ENCODE measurements at regions of chr11 and their contacts with region 1.

Region 1: GRCh38 chr11:47552566-47553416 is at the start of gene CELF1:
- DNase-seq: peak; percentile 85 to 97 (median 91)
- ATAC-seq: peak; percentile 93
- H3K4me3 ChIP-seq: peak within 1 kb of the TSS; percentile 99
- H3K4me3 Mint-ChIP-seq: peak within 1 kb of the TSS; percentile 98
- H3K27ac ChIP-seq: peak within 1 kb of the TSS; percentile 78 to 88
- H3K27ac Mint-ChIP-seq: peak within 1 kb of the TSS; percentile 98
- H3K4me1 ChIP-seq: peaks cover 42% of the 10 kb centered on the region
- H3K4me1 Mint-ChIP-seq: peaks cover 54% of the 10 kb centered on the region
- H3K27me3 ChIP-seq: no peaks in the 10 kb centered on the region
- H3K27me3 Mint-ChIP-seq: no peaks in the 10 kb centered on the region
- CTCF ChIP-seq: peak; percentile 81
- total RNA-seq, gene CELF1: 103 to 111 TPM

Region 2: DNA sequence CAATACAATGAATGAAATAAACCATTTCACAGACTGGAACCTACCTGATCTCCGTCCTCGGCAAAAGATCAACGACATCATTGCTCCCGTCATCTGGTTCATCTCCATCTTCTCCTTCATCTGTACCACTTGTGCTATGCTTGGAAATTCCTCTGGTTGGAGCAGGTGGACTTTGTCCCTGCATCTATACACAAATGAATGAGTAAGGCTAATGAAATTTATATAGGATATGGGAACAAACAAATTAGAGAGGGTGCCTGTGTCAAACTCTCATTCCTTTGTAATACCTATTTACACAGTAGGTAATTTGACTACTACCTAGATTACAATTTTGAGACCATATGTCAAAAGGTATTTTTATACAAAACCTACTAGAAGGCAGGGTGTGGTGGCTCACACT is 774.4 kb before region 1 on chr11:
- CTCF ChIA-PET with region 1: no interaction called
- POLR2A ChIA-PET with region 1: no interaction called
- intact Hi-C with region 1: no loop called
- DNase-seq: no peak
- ATAC-seq: no peak
- H3K4me3 ChIP-seq: no peak overlapping the region
- H3K4me3 Mint-ChIP-seq: no peak overlapping the region
- H3K27ac ChIP-seq: no peak overlapping the region
- H3K27ac Mint-ChIP-seq: no peak overlapping the region
- H3K4me1 ChIP-seq: no peaks in the 10 kb centered on the region
- H3K4me1 Mint-ChIP-seq: no peaks in the 10 kb centered on the region
- H3K27me3 ChIP-seq: no peaks in the 10 kb centered on the region
- H3K27me3 Mint-ChIP-seq: no peaks in the 10 kb centered on the region
- CTCF ChIP-seq: no peak

Region 3: GRCh38 chr11:47426061-47426956 is 126.5 kb before region 1 on chr11 and contains the start of gene PSMC3:
- CTCF ChIA-PET with region 1: interaction called, 5 read pairs
- POLR2A ChIA-PET with region 1: no interaction called
- intact Hi-C with region 1: loop called in 1 of 2 experiments (anchors 2 kb)
- DNase-seq: peak; percentile 93 to 99 (median 98)
- ATAC-seq: peak; percentile 98
- H3K4me3 ChIP-seq: peak within 1 kb of the TSS; percentile 100
- H3K4me3 Mint-ChIP-seq: peak within 1 kb of the TSS; percentile 100
- H3K27ac ChIP-seq: peak within 1 kb of the TSS; percentile 84
- H3K27ac Mint-ChIP-seq: peak within 1 kb of the TSS; percentile 90
- H3K4me1 ChIP-seq: peaks cover 30% of the 10 kb centered on the region
- H3K4me1 Mint-ChIP-seq: peaks cover 25% of the 10 kb centered on the region
- H3K27me3 ChIP-seq: no peaks in the 10 kb centered on the region
- H3K27me3 Mint-ChIP-seq: no peaks in the 10 kb centered on the region
- CTCF ChIP-seq: no peak
- total RNA-seq, gene PSMC3: 51.3 to 59.5 TPM

Region 4: DNA sequence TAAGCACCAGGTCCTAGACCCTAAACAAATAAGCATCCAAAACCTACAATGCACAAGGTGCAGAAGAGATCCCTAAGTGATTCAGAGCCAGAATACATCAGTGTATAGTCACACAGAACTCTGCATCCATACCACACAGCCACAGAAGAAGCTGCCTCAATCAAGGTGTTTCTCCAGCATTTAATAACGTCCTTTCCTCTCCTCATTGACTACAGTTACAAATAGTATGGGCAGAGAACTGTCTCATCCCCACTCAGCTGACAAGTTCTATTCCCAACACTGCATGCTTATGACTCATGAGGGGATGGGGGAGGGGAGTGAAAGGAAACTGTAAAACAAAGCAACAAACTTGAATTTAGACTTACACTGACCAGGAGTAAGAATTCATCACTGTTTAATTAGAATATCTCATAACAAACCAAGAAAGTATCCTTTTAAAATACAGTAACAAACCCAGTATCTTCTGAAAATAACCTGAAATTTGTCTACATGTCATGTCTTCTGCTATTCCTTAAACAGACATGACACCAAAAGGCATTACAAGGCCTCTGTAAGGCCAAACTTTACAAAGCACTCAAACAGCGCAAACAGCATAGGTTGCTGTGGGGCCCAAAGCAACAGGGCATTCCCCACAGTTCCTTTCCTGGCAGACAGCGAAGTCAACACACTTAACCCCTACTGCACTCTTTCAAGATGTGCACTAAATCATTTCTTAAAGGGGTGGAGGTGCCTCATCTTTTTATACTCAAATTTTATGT is 29.1 kb before region 1 on chr11:
- CTCF ChIA-PET with region 1: interaction called, 4 read pairs
- POLR2A ChIA-PET with region 1: interaction called, 5 read pairs
- intact Hi-C with region 1: loop called in 1 of 2 experiments (anchors 1 kb)
- DNase-seq: peak in 11 of 14 experiments; percentile 13 to 81 (median 42)
- ATAC-seq: peak; percentile 82
- H3K4me3 ChIP-seq: peak overlapping the region; percentile 10
- H3K4me3 Mint-ChIP-seq: peak overlapping the region; percentile 55
- H3K27ac ChIP-seq: peak overlapping the region; percentile 61 to 63
- H3K27ac Mint-ChIP-seq: peak overlapping the region; percentile 87
- H3K4me1 ChIP-seq: peaks cover 64% of the 10 kb centered on the region
- H3K4me1 Mint-ChIP-seq: peaks cover 58% of the 10 kb centered on the region
- H3K27me3 ChIP-seq: no peaks in the 10 kb centered on the region
- H3K27me3 Mint-ChIP-seq: no peaks in the 10 kb centered on the region
- CTCF ChIP-seq: no peak

Region 5: DNA sequence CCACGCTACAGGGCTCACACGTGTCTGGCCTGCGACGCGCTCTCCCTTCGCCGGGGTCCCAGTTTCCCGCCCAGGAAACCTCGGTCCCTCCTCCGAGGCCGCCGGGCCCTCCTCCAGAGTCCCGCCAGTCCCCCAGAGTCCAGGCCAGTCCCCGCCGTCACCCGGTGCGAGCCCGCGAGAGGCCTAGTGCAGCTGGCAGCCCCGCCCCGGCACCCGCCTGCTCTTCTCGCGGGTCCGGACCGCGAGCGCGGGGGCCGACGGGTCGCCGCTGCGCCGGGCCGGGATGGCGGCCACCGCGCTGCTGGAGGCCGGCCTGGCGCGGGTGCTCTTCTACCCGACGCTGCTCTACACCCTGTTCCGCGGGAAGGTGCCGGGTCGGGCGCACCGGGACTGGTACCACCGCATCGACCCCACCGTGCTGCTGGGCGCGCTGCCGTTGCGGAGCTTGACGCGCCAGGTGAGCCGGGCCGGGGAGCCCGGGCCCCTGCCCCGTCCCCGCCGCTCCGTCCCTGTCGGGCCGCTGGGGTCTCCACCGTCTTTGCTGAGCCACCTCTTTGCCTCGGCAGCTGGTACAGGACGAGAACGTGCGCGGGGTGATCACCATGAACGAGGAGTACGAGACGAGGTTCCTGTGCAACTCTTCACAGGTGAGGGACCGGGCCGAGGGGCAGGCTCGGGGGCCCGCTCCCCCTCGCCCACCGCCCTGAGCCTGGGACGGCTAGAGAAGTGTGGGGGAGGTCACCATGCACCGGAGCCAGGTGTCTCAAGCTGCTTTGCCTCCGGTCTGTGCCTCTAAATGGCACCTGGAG is 12.8 kb after region 1 on chr11 and contains the start of gene PTPMT1:
- CTCF ChIA-PET with region 1: interaction called, 19 read pairs
- POLR2A ChIA-PET with region 1: interaction called, 38 read pairs
- intact Hi-C with region 1: no loop called
- DNase-seq: peak; percentile 34 to 81 (median 58)
- ATAC-seq: peak; percentile 88
- H3K4me3 ChIP-seq: peak within 1 kb of the TSS; percentile 86
- H3K4me3 Mint-ChIP-seq: peak within 1 kb of the TSS; percentile 87
- H3K27ac ChIP-seq: peak within 1 kb of the TSS; percentile 41 to 83
- H3K27ac Mint-ChIP-seq: peak within 1 kb of the TSS; percentile 80
- H3K4me1 ChIP-seq: peaks cover 25% of the 10 kb centered on the region
- H3K4me1 Mint-ChIP-seq: peaks cover 20% of the 10 kb centered on the region
- H3K27me3 ChIP-seq: no peaks in the 10 kb centered on the region
- H3K27me3 Mint-ChIP-seq: no peaks in the 10 kb centered on the region
- CTCF ChIP-seq: no peak
- total RNA-seq, gene PTPMT1: 18.9 to 26.7 TPM

Region 6: GRCh38 chr11:47642099-47642855 is 89.5 kb after region 1 on chr11 and contains the start of gene MTCH2:
- CTCF ChIA-PET with region 1: no interaction called
- POLR2A ChIA-PET with region 1: no interaction called
- intact Hi-C with region 1: loop called in 1 of 2 experiments (anchors 2 kb)
- DNase-seq: peak; percentile 91 to 99 (median 95)
- ATAC-seq: peak; percentile 92
- H3K4me3 ChIP-seq: peak within 1 kb of the TSS; percentile 96
- H3K4me3 Mint-ChIP-seq: peak within 1 kb of the TSS; percentile 90
- H3K27ac ChIP-seq: peak within 1 kb of the TSS; percentile 88 to 91
- H3K27ac Mint-ChIP-seq: peak within 1 kb of the TSS; percentile 89
- H3K4me1 ChIP-seq: peaks cover 28% of the 10 kb centered on the region
- H3K4me1 Mint-ChIP-seq: peaks cover 26% of the 10 kb centered on the region
- H3K27me3 ChIP-seq: no peaks in the 10 kb centered on the region
- H3K27me3 Mint-ChIP-seq: no peaks in the 10 kb centered on the region
- CTCF ChIP-seq: peak; percentile 6
- total RNA-seq, gene MTCH2: 11.8 to 12.7 TPM